CD8-positive, alpha-beta T cell (primary cell): ENCODE measurements at regions of chr4 and their contacts with region 1.

Region 1: GRCh38 chr4:101232074-101232776 is 115.1 kb downstream of the PPP3CA start:
- DNase-seq: no peak
- ATAC-seq: no peak
- H3K4me3 ChIP-seq: no peak overlapping the region
- H3K4me3 Mint-ChIP-seq: no peak overlapping the region
- H3K27ac ChIP-seq: no peak overlapping the region
- H3K27ac Mint-ChIP-seq: no peak overlapping the region
- H3K4me1 ChIP-seq: no peaks in the 10 kb centered on the region
- H3K4me1 Mint-ChIP-seq: peaks cover 19% of the 10 kb centered on the region
- H3K27me3 ChIP-seq: no peaks in the 10 kb centered on the region
- H3K27me3 Mint-ChIP-seq: no peaks in the 10 kb centered on the region
- CTCF ChIP-seq: no peak

Region 2: DNA sequence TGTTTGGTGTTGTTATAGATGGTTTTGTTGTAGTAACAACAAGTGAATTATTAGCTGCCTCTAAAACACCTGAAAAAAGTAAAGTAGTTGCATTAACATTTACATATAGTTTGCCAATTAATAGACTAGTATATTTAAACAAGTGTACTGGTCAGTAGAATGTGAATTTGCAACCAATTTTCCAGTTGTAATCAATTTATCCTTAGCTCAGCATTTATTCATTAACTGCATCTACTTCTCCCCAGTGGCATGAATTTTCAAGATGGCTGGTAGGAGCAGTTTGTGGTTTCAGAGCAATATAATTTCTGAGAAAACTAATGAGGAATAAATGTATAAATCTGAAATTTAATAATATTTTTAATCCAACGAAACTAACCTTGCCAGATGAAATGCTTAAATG is 752.3 kb before region 1 on chr4:
- CTCF ChIA-PET with region 1: no interaction called
- POLR2A ChIA-PET with region 1: no interaction called
- intact Hi-C with region 1: no loop called
- DNase-seq: no peak
- ATAC-seq: no peak
- H3K4me3 ChIP-seq: no peak overlapping the region
- H3K4me3 Mint-ChIP-seq: no peak overlapping the region
- H3K27ac ChIP-seq: no peak overlapping the region
- H3K27ac Mint-ChIP-seq: no peak overlapping the region
- H3K4me1 ChIP-seq: no peaks in the 10 kb centered on the region
- H3K4me1 Mint-ChIP-seq: no peaks in the 10 kb centered on the region
- H3K27me3 ChIP-seq: no peaks in the 10 kb centered on the region
- H3K27me3 Mint-ChIP-seq: no peaks in the 10 kb centered on the region
- CTCF ChIP-seq: no peak

Region 3: DNA sequence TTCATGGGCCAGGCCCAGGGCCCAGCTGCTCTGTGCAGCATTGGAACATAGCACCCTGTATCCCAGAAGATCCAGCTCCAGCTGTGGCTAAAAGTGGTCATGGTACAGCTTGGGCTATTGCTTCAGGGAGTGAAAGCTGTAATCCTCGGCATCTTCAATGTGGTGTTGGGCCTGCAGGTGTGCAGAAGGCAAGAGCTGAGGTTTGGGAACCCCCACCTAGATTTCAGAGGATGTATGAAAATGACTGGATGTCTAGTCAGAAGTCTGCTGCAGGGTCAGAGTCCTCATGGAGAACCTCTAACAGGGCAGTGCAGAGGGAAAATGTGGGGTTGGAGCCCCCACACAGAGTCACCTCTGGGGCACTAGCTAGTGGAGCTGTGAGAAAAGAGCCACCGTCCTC is 226.6 kb before region 1 on chr4:
- CTCF ChIA-PET with region 1: no interaction called
- POLR2A ChIA-PET with region 1: no interaction called
- intact Hi-C with region 1: no loop called
- DNase-seq: no peak
- ATAC-seq: no peak
- H3K4me3 ChIP-seq: no peak overlapping the region
- H3K4me3 Mint-ChIP-seq: no peak overlapping the region
- H3K27ac ChIP-seq: no peak overlapping the region
- H3K27ac Mint-ChIP-seq: no peak overlapping the region
- H3K4me1 ChIP-seq: no peaks in the 10 kb centered on the region
- H3K4me1 Mint-ChIP-seq: peaks cover 8% of the 10 kb centered on the region
- H3K27me3 ChIP-seq: no peaks in the 10 kb centered on the region
- H3K27me3 Mint-ChIP-seq: no peaks in the 10 kb centered on the region
- CTCF ChIP-seq: no peak

Region 4: GRCh38 chr4:101211146-101211908 is 20.9 kb before region 1 on chr4:
- CTCF ChIA-PET with region 1: no interaction called
- POLR2A ChIA-PET with region 1: no interaction called
- intact Hi-C with region 1: loop called in 1 of 2 experiments (anchors 2 kb)
- DNase-seq: no peak
- ATAC-seq: no peak
- H3K4me3 ChIP-seq: no peak overlapping the region
- H3K4me3 Mint-ChIP-seq: no peak overlapping the region
- H3K27ac ChIP-seq: no peak overlapping the region
- H3K27ac Mint-ChIP-seq: no peak overlapping the region
- H3K4me1 ChIP-seq: peaks cover 5% of the 10 kb centered on the region
- H3K4me1 Mint-ChIP-seq: peaks cover 27% of the 10 kb centered on the region
- H3K27me3 ChIP-seq: no peaks in the 10 kb centered on the region
- H3K27me3 Mint-ChIP-seq: no peaks in the 10 kb centered on the region
- CTCF ChIP-seq: no peak

Region 5: GRCh38 chr4:101217353-101218031 is 14.7 kb before region 1 on chr4:
- CTCF ChIA-PET with region 1: interaction called, 3 read pairs
- POLR2A ChIA-PET with region 1: no interaction called
- intact Hi-C with region 1: loop called in 1 of 2 experiments (anchors 2 kb)
- DNase-seq: no peak
- ATAC-seq: no peak
- H3K4me3 ChIP-seq: no peak overlapping the region
- H3K4me3 Mint-ChIP-seq: no peak overlapping the region
- H3K27ac ChIP-seq: no peak overlapping the region
- H3K27ac Mint-ChIP-seq: no peak overlapping the region
- H3K4me1 ChIP-seq: no peaks in the 10 kb centered on the region
- H3K4me1 Mint-ChIP-seq: peaks cover 13% of the 10 kb centered on the region
- H3K27me3 ChIP-seq: no peaks in the 10 kb centered on the region
- H3K27me3 Mint-ChIP-seq: no peaks in the 10 kb centered on the region
- CTCF ChIP-seq: no peak

Region 6: GRCh38 chr4:101252721-101253120 is 20.5 kb after region 1 on chr4:
- CTCF ChIA-PET with region 1: no interaction called
- POLR2A ChIA-PET with region 1: no interaction called
- intact Hi-C with region 1: no loop called
- DNase-seq: no peak
- ATAC-seq: no peak
- H3K4me3 ChIP-seq: no peak overlapping the region
- H3K4me3 Mint-ChIP-seq: no peak overlapping the region
- H3K27ac ChIP-seq: no peak overlapping the region
- H3K27ac Mint-ChIP-seq: no peak overlapping the region
- H3K4me1 ChIP-seq: peaks cover 6% of the 10 kb centered on the region
- H3K4me1 Mint-ChIP-seq: peaks cover 32% of the 10 kb centered on the region
- H3K27me3 ChIP-seq: no peaks in the 10 kb centered on the region
- H3K27me3 Mint-ChIP-seq: no peaks in the 10 kb centered on the region
- CTCF ChIP-seq: no peak

Region 7: GRCh38 chr4:101419324-101420135 is 187.3 kb after region 1 on chr4:
- CTCF ChIA-PET with region 1: no interaction called
- POLR2A ChIA-PET with region 1: no interaction called
- intact Hi-C with region 1: no loop called
- DNase-seq: peak in 1 of 9 experiments; percentile 40
- ATAC-seq: no peak
- H3K4me3 ChIP-seq: no peak overlapping the region
- H3K4me3 Mint-ChIP-seq: no peak overlapping the region
- H3K27ac ChIP-seq: no peak overlapping the region
- H3K27ac Mint-ChIP-seq: no peak overlapping the region
- H3K4me1 ChIP-seq: peaks cover 43% of the 10 kb centered on the region
- H3K4me1 Mint-ChIP-seq: peaks cover 39% of the 10 kb centered on the region
- H3K27me3 ChIP-seq: peaks cover 0 to 4% of the 10 kb centered on the region in 2 experiments
- H3K27me3 Mint-ChIP-seq: peaks cover 42% of the 10 kb centered on the region
- CTCF ChIP-seq: no peak